Heart right ventricle (tissue), 16 donors: ENCODE measurements at regions of chr13 and their contacts with region 1.

Region 1: DNA sequence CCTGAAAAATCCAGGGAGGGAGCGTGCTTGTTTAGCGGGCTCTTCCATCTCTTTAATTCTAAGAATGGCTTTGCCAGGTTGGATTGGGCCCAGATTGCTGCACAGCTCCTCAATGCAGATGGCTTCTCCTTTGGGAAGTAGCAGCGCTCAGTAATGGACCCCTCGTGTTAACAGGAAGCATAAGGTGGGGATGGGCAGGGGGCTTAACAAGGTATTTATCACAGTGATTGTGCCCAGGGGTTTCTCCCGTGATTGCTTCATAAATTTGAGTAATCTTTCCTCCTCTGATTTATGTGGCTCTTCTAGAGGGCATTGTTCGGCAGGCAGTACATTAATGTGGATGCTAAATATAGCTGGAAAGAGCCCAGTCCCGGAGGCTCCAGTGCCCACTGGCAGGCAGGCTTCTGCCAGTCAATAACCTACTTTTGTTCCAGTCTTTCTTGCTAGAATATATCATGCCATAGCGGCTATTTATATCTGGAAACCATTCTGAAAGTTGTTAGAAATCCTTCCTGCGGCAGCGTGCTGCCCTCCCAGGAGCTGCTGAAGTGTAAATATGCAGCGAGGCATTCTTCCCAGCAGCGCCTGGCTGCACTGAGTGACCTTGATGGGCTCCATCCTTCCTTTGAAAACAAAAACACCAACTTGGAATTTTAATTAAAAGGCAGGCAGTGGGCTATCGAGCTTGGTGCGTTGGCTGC is 65.0 kb downstream of the FGF9 start:
- DNase-seq: peak; percentile 21 to 22
- ATAC-seq: peak; percentile 71 to 96 (median 89)
- H3K4me3 ChIP-seq: peak overlapping the region in 5 of 10 donors; percentile 8 to 38 (median 13)
- H3K27ac ChIP-seq: peak overlapping the region; percentile 47 to 80 (median 71)
- H3K4me1 ChIP-seq: peaks cover 0 to 11% (median 4%) of the 10 kb centered on the region in 9 donors
- H3K27me3 ChIP-seq: no peaks in the 10 kb centered on the region
- CTCF ChIP-seq: peak in 1 of 9 donors; percentile 5

Region 2: GRCh38 chr13:21670883-21671619 is 64.8 kb before region 1 on chr13 and contains the start of gene FGF9:
- intact Hi-C with region 1: loop called in 3 of 10 experiments (anchors 5 to 10 kb)
- DNase-seq: peak; percentile 46 to 77
- ATAC-seq: peak; percentile 76 to 88 (median 84)
- H3K4me3 ChIP-seq: peak within 1 kb of the TSS; percentile 44 to 77 (median 64)
- H3K27ac ChIP-seq: peak within 1 kb of the TSS in 9 of 10 donors; percentile 13 to 71 (median 62)
- H3K4me1 ChIP-seq: peaks cover 5 to 65% (median 46%) of the 10 kb centered on the region in 9 donors
- H3K27me3 ChIP-seq: peaks cover 0 to 98% (median 69%) of the 10 kb centered on the region in 7 donors
- CTCF ChIP-seq: peak in 1 of 9 donors; percentile 12
- total RNA-seq, gene FGF9: 4.5 to 14.0 (median 9.3) TPM

Region 3: DNA sequence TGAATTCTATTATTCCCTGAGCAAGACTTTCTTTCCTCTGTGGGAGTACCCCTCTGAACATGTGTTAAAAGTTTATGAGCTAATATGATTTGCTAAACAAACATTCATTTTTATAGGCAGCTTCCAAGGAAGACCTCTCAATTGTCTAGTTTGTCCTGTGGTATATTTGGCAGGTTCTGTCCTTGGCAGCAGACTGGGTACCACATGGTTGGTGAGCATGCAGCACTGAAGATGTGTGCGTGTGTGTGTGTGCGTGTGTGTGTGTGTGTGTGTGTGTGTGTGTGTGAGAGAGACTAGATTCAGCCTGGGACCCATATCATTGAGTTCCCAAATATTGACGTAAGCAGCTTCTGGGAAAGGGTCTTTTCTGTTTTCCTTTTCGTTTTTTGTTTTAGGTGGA is 41.0 kb before region 1 on chr13:
- intact Hi-C with region 1: loop called in 1 of 10 experiments (anchors 5 kb)
- DNase-seq: peak in 1 of 2 donors; percentile 73
- ATAC-seq: peak in 6 of 8 donors; percentile 20 to 77 (median 59)
- H3K4me3 ChIP-seq: no peak overlapping the region
- H3K27ac ChIP-seq: peak overlapping the region in 1 of 10 donors; percentile 22
- H3K4me1 ChIP-seq: peaks cover 0 to 25% (median 9%) of the 10 kb centered on the region in 9 donors
- H3K27me3 ChIP-seq: peaks cover 0 to 13% (median 0%) of the 10 kb centered on the region in 7 donors
- CTCF ChIP-seq: no peak

Region 4: DNA sequence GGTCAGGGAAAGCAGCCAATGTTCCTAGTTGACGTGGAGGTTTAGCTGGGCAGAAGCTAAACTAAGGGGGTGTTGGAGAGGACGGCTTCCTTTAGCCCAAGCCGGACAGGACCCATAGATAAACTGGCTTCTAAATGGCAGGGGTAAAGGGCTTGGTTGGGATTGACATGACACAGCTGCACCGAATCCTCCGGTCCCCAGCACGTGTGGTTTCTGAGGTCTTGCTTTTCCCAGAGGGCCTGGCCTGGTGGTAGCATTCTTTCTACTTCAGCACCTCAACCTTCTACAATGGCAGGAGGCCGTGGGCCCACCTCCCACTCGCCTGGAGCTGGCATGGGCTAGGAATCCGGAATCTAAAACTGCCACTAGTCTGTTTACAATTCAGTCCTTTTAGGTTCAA is 98.1 kb after region 1 on chr13:
- intact Hi-C with region 1: no loop called
- DNase-seq: no peak
- ATAC-seq: no peak
- H3K4me3 ChIP-seq: no peak overlapping the region
- H3K27ac ChIP-seq: no peak overlapping the region
- H3K4me1 ChIP-seq: no peaks in the 10 kb centered on the region
- H3K27me3 ChIP-seq: peaks cover 0 to 5% (median 0%) of the 10 kb centered on the region in 7 donors
- CTCF ChIP-seq: no peak

Region 5: DNA sequence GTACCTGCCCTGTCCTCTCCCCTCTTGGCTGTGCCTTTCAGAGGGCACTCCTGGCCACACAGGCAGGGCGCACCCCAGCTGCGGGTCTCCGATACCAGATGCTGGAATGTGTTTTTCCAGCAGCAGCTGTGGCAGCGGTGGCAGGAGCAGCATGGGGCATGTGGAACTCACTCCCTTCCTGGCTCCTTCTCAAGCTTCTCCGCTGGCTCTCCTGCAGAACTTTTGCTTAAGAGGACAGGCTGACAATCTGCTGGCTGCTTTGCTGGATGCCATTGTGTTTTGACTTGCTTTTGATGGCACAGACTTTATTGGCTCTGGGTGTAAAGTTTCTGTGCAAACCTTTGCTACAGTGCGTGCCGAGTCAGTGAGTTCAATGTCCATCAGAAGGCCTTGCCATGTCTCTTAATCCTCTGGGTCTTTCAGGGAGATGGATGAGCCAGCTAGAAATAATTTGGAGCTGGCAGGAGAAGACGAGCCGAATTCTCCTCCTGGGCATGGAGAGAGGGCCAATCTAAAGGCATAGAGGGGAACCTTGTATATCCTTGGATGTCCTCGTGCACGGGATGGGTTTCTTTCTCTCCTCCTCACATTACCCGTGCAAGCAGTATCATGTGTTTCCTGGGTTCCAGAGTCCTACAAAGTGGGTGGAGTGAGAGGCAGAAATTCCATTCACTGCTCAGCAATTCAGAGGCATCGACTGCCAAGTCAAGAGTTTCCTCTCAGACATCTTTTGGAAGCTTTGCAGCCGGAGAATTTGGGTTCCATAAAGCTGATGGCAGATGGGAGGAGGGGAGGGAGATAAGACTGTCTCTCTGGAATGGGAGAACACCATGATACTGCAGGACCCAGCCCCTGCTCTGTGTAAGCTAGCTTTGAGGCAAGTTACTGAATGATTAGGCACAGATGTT is 166.2 kb after region 1 on chr13:
- intact Hi-C with region 1: no loop called
- DNase-seq: no peak
- ATAC-seq: peak in 7 of 8 donors; percentile 27 to 88 (median 76)
- H3K4me3 ChIP-seq: no peak overlapping the region
- H3K27ac ChIP-seq: no peak overlapping the region
- H3K4me1 ChIP-seq: peaks cover 0 to 17% (median 5%) of the 10 kb centered on the region in 9 donors
- H3K27me3 ChIP-seq: peaks cover 0 to 8% (median 0%) of the 10 kb centered on the region in 7 donors
- CTCF ChIP-seq: no peak